Uterus (tissue), 4 donors: ENCODE measurements at regions of chr2 and their contacts with region 1.

Region 1: DNA sequence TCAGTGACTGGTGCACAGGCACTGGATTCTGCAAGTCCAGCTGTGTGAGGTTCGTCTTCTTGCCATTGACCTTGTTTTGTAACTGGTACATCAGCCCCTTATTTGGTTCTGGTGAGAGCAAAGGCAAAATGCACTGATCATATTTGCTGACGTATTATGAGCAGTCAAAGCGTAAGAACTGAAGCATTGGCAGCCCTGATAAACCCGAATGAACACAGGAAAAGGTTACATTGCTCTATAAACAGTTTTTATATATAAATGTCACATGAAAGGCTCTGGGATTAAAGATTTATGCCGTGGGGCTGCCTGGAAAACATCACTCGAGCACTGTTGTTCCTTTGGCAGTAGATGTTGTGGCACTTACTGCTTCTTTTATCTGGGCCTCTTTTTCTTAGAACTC is 167.9 kb downstream of the IRS1 start:
- DNase-seq: peak; percentile 60 to 88
- H3K4me3 ChIP-seq: no peak overlapping the region
- H3K27ac ChIP-seq: peak overlapping the region; percentile 66 to 85
- H3K4me1 ChIP-seq: peaks cover 0 to 14% of the 10 kb centered on the region in 2 donors
- H3K27me3 ChIP-seq: no peaks in the 10 kb centered on the region
- CTCF ChIP-seq: no peak
- POLR2A ChIP-seq: peak in 1 of 2 donors; percentile 24

Region 2: GRCh38 chr2:226791487-226792081 is 159.9 kb after region 1 on chr2:
- intact Hi-C with region 1: loop called (anchors 10 kb)
- DNase-seq: peak; percentile 82 to 88
- H3K4me3 ChIP-seq: peak overlapping the region; percentile 41 to 69
- H3K27ac ChIP-seq: peak overlapping the region; percentile 93 to 96
- H3K4me1 ChIP-seq: peaks cover 6 to 15% of the 10 kb centered on the region in 2 donors
- H3K27me3 ChIP-seq: no peaks in the 10 kb centered on the region
- CTCF ChIP-seq: peak in 3 of 4 experiments; percentile 44 to 77 (median 63)
- POLR2A ChIP-seq: peak; percentile 28 to 73